ENCODE measurements at regions of chr1 and their contacts with region 1.

Region 1: GRCh38 chr1:112466078-112466660 is 42.6 kb upstream of the WNT2B start:
- DNase-seq: peak; percentile 96 to 98 (median 98)
- H3K4me3 ChIP-seq: peak overlapping the region in 2 of 3 experiments; percentile 0 to 49
- H3K4me3 Mint-ChIP-seq: peak overlapping the region; percentile 66 to 78
- H3K27ac ChIP-seq: peak overlapping the region; percentile 69 to 87
- H3K27ac Mint-ChIP-seq: peak overlapping the region; percentile 84 to 95 (median 89)
- H3K4me1 ChIP-seq: peaks cover 24 to 28% of the 10 kb centered on the region in 2 donors
- H3K4me1 Mint-ChIP-seq: peaks cover 42% of the 10 kb centered on the region
- H3K27me3 ChIP-seq: no peaks in the 10 kb centered on the region
- H3K27me3 Mint-ChIP-seq: peaks cover 3 to 5% (median 3%) of the 10 kb centered on the region in 3 donors
- CTCF ChIP-seq: peak; percentile 83

Region 2: DNA sequence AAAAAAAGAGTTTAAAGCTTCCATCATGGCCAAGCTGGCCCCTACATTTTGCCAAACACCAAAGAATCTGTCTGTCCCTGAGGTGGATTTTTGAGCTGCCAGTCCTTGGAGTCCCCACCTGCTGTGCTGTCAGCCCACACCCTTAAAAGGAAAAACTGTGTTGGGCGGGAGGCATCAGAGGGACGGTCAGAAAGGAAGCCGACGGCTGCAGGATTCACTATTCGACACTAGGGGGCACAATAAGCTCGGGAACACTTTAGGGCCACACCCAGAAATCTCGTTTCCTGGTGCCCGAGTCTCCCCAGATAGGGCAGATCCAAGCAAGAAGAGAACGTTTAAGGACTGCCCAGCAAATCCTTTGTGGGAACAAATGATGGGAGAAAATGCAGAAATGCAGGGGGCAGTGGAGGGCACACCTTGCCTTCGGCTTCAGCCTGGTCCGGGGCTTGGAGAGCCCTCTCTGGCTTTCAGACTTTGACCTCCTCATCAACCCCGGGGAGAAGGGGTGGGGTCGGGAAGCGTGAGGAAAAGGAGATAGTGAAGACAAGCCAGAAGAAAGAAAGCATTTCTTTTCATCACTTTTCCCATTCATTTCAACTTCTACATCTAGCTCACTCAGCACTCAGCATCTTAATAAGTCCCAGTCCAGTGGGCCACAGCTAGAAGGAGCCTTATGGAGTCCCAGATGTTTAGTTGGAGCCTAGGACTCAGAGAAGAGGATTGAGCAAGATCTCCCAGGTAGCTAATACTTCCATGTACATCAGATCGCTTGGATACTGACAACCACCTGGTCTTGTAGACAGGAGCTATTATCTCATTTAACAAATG is 75.2 kb before region 1 on chr1:
- intact Hi-C with region 1: loop called (anchors 1 to 5 kb)
- DNase-seq: peak; percentile 79 to 86 (median 83)
- H3K4me3 ChIP-seq: peak overlapping the region in 1 of 3 experiments; percentile 51
- H3K4me3 Mint-ChIP-seq: peak overlapping the region; percentile 57 to 60
- H3K27ac ChIP-seq: no peak overlapping the region
- H3K27ac Mint-ChIP-seq: peak overlapping the region in 2 of 7 donors; percentile 25 to 44
- H3K4me1 ChIP-seq: peaks cover 33 to 39% of the 10 kb centered on the region in 2 donors
- H3K4me1 Mint-ChIP-seq: peaks cover 30% of the 10 kb centered on the region
- H3K27me3 ChIP-seq: peaks cover 0 to 2% of the 10 kb centered on the region in 2 donors
- H3K27me3 Mint-ChIP-seq: peaks cover 3 to 13% (median 8%) of the 10 kb centered on the region in 3 donors
- CTCF ChIP-seq: peak; percentile 88